ENCODE measurements at regions of chr19 and their contacts with region 1.

Region 1: GRCh38 chr19:10717356-10718204 is at the start of gene DNM2:
- DNase-seq: peak; percentile 98
- ATAC-seq: peak; percentile 92
- H3K4me3 Mint-ChIP-seq: peak within 1 kb of the TSS; percentile 97
- H3K27ac Mint-ChIP-seq: peak within 1 kb of the TSS; percentile 89
- H3K4me1 Mint-ChIP-seq: peaks cover 45% of the 10 kb centered on the region
- H3K27me3 Mint-ChIP-seq: no peaks in the 10 kb centered on the region
- total RNA-seq, gene DNM2: 167 to 185 TPM

Region 2: GRCh38 chr19:10408511-10409283 is 308.9 kb before region 1 on chr19:
- CTCF ChIA-PET with region 1: interaction called, 3 read pairs
- POLR2A ChIA-PET with region 1: no interaction called
- intact Hi-C with region 1: loop called in 1 of 2 experiments (anchors 1 kb)
- DNase-seq: peak; percentile 84
- ATAC-seq: peak; percentile 73
- H3K4me3 Mint-ChIP-seq: peak overlapping the region; percentile 26
- H3K27ac Mint-ChIP-seq: peak overlapping the region; percentile 73
- H3K4me1 Mint-ChIP-seq: peaks cover 69% of the 10 kb centered on the region
- H3K27me3 Mint-ChIP-seq: no peaks in the 10 kb centered on the region

Region 3: GRCh38 chr19:10587790-10588150 is 129.8 kb before region 1 on chr19:
- CTCF ChIA-PET with region 1: no interaction called
- POLR2A ChIA-PET with region 1: no interaction called
- intact Hi-C with region 1: no loop called
- DNase-seq: no peak
- ATAC-seq: no peak
- H3K4me3 Mint-ChIP-seq: no peak overlapping the region
- H3K27ac Mint-ChIP-seq: no peak overlapping the region
- H3K4me1 Mint-ChIP-seq: peaks cover 16% of the 10 kb centered on the region
- H3K27me3 Mint-ChIP-seq: peaks cover 7% of the 10 kb centered on the region

Region 4: DNA sequence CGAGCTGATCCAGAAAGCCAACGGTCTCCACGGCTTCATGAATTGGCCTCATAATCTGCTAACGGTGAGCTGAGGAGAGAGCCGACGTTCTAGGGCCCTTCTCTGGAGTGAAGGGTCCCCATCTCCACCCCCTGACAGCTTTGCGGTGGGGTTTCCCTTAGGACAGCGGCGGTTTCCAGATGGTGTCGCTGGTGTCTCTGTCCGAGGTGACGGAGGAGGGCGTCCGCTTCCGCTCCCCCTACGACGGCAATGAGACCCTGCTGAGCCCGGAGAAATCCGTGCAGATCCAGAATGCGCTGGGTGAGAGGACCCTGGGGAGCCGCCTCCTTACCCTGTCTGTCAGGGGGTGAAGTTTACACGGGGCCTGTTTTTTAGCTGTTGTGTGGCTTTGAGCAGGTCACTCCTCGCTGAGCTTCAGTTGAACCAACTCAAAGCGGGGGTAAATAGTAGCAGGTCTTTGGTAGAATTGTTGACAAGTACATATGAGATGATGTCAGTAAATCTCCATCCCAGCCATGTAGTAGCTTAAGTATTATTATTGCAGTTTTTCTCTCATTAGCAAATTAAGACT is 15.5 kb before region 1 on chr19:
- CTCF ChIA-PET with region 1: interaction called, 48 read pairs
- POLR2A ChIA-PET with region 1: interaction called, 16 read pairs
- intact Hi-C with region 1: loop called in 1 of 2 experiments (anchors 1 kb)
- DNase-seq: peak; percentile 60
- ATAC-seq: peak; percentile 43
- H3K4me3 Mint-ChIP-seq: peak overlapping the region; percentile 91
- H3K27ac Mint-ChIP-seq: peak overlapping the region; percentile 74
- H3K4me1 Mint-ChIP-seq: peaks cover 10% of the 10 kb centered on the region
- H3K27me3 Mint-ChIP-seq: no peaks in the 10 kb centered on the region

Region 5: DNA sequence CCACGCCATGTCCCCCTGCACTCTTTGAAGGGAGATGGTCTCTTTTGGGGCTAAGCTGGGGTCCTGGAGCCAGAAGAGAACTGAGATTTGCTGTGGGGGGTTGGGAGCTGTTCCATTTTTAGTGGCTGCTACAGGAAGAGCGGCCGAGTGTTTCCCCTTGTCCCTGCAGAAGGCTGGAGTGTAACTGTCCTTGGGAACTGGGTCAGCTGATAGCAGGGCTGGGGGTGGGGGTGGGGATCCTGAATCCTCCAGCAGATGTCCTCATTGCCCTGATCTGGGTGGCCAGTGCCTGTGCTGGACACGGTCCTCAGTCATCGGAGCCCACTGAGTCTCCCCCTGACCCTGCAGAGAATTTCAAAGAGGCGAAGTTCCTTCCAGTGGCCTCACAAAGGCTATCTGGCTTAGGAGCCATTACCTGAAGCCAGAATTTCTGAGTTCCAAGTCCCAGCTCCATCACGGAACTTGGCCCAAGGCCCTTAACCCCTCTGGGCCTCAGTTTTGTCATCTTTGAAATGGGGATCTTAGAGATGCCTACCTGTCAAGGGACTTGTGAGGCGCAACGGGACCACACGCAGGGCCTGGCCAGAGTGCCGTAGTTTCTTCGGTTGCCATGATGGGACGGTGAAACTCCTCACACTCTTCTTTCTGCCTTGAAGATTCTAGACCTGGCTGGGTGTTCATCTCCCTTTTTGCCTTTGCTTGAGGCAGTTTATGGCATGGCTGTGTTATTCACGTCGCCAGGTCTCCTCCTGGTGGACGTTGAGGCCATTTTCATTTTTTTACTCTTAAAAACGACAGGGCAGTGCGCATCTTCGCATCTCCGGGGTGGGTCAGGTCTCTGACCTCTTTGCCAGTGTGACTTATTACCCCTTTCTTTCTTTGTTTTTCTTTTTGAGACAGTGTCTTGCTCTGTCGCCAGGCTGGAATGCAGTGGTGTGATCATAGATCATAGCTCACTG is 52.2 kb after region 1 on chr19:
- CTCF ChIA-PET with region 1: interaction called, 11 read pairs
- POLR2A ChIA-PET with region 1: no interaction called
- intact Hi-C with region 1: loop called in 1 of 2 experiments (anchors 1 kb)
- DNase-seq: peak; percentile 28
- ATAC-seq: no peak
- H3K4me3 Mint-ChIP-seq: no peak overlapping the region
- H3K27ac Mint-ChIP-seq: peak overlapping the region; percentile 13
- H3K4me1 Mint-ChIP-seq: peaks cover 17% of the 10 kb centered on the region
- H3K27me3 Mint-ChIP-seq: no peaks in the 10 kb centered on the region

Region 6: DNA sequence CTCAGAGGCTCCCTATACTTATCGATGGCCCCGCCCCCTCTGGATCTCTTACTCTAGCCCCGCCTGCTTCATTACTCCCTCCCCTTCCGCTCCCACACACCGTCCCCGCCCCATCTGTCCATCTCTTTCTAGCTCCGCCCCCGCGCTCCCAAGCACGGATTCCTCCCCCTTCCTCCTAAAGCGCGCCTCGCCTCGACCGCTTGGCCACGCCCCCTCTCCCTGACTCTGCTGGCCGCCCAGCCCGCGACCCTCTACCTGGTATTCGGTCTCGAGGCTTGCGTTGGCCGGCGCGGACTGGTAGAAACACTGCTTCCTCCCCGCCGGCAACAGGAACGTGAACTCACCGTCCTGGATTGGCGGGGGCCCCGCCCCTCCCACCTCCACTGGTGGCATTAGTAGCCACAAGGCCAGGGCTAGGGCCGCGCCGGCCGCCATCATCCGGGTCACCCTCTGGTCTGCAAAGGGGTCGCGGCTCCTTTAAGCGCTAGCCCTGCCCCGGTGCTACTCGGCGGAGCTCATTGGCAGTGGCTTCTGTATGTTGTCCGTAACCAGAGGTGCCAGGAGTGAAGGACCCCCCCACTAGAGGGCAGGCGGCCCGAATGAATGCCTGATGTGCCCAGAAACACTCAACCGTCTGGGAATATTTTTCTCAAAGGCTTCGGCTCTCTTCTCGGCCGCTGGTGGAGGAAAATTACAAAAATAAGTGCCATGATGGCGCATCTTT is 118.3 kb after region 1 on chr19 and contains the start of gene TMED1:
- CTCF ChIA-PET with region 1: interaction called, 18 read pairs
- POLR2A ChIA-PET with region 1: interaction called, 21 read pairs
- intact Hi-C with region 1: loop called (anchors 1 kb)
- DNase-seq: peak; percentile 99
- ATAC-seq: peak; percentile 93
- H3K4me3 Mint-ChIP-seq: peak within 1 kb of the TSS; percentile 94
- H3K27ac Mint-ChIP-seq: peak within 1 kb of the TSS; percentile 99
- H3K4me1 Mint-ChIP-seq: peaks cover 15% of the 10 kb centered on the region
- H3K27me3 Mint-ChIP-seq: no peaks in the 10 kb centered on the region
- total RNA-seq, gene TMED1: 8.7 to 15.3 TPM

Region 7: GRCh38 chr19:10870955-10871603 is 153.5 kb after region 1 on chr19 and contains the start of gene CARM1:
- CTCF ChIA-PET with region 1: interaction called, 9 read pairs
- POLR2A ChIA-PET with region 1: no interaction called
- intact Hi-C with region 1: loop called in 1 of 2 experiments (anchors 1 kb)
- DNase-seq: peak; percentile 100
- ATAC-seq: peak; percentile 88
- H3K4me3 Mint-ChIP-seq: peak within 1 kb of the TSS; percentile 80
- H3K27ac Mint-ChIP-seq: peak within 1 kb of the TSS; percentile 97
- H3K4me1 Mint-ChIP-seq: peaks cover 28% of the 10 kb centered on the region
- H3K27me3 Mint-ChIP-seq: no peaks in the 10 kb centered on the region
- total RNA-seq, gene CARM1: 82.3 to 96.8 TPM

Region 8: DNA sequence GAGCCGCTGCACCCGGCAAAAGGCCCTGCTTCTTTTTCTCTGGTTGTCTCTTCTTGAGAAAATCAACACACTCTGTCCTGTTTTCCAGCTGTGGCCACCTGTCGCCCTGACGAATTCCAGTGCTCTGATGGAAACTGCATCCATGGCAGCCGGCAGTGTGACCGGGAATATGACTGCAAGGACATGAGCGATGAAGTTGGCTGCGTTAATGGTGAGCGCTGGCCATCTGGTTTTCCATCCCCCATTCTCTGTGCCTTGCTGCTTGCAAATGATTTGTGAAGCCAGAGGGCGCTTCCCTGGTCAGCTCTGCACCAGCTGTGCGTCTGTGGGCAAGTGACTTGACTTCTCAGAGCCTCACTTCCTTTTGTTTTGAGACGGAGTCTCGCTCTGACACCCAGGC is 388.9 kb after region 1 on chr19:
- CTCF ChIA-PET with region 1: no interaction called
- POLR2A ChIA-PET with region 1: no interaction called
- intact Hi-C with region 1: no loop called
- DNase-seq: no peak
- ATAC-seq: no peak
- H3K4me3 Mint-ChIP-seq: no peak overlapping the region
- H3K27ac Mint-ChIP-seq: no peak overlapping the region
- H3K4me1 Mint-ChIP-seq: no peaks in the 10 kb centered on the region
- H3K27me3 Mint-ChIP-seq: no peaks in the 10 kb centered on the region

Region 9: GRCh38 chr19:11374433-11375142 is 657.0 kb after region 1 on chr19 and contains the start of gene SWSAP1:
- CTCF ChIA-PET with region 1: no interaction called
- POLR2A ChIA-PET with region 1: no interaction called
- intact Hi-C with region 1: loop called in 1 of 2 experiments (anchors 1 kb)
- DNase-seq: peak; percentile 98
- ATAC-seq: peak; percentile 92
- H3K4me3 Mint-ChIP-seq: no peak within 1 kb of the TSS
- H3K27ac Mint-ChIP-seq: no peak within 1 kb of the TSS
- H3K4me1 Mint-ChIP-seq: peaks cover 28% of the 10 kb centered on the region
- H3K27me3 Mint-ChIP-seq: no peaks in the 10 kb centered on the region
- total RNA-seq, gene SWSAP1: 1.5 to 1.7 TPM